ENCODE measurements at regions of chr5 and their contacts with region 1.

Region 1: DNA sequence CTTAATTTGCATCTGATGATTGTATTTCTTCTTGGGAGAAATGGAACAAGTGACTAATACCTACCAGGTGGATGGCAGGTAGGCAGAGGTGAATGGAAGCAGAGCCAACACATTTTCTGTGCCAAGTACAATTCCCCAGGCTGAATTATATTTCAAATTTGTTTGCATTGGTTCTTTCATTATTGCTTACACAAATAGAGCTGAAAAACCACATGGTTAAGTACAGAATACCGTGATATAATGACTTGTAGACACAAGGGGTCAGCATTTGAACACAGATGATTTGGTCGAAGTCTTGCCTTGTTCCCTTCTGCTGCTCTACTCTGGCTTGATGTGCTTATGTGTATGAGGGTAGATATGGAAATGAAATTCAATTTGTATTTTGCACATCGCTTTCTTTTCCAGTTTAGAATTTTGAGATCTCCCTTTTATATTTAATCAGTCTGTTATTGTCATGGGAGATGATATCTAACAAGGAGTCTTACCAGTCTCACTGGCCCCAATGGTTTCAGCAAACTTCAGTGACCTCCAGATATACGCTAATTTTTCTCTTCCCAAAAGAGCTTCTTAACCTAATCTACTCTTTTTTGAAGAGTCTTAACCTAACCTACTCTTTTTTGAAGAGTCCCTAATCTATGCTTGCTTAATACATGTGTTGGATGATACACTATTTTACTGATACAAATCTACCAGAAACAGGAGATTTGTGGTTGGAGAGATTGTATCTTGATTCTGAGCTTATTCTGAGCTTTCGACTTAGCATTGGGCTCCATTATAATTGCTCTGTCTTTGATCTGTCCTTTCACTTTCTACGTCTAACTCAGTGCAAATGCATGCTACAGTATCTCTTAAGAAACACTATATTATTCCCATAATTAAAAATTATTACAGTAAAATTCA is 88.1 kb downstream of the PCSK1 start:
- DNase-seq: peak in 1 of 2 donors; percentile 12
- ATAC-seq: peak; percentile 96

Region 2: DNA sequence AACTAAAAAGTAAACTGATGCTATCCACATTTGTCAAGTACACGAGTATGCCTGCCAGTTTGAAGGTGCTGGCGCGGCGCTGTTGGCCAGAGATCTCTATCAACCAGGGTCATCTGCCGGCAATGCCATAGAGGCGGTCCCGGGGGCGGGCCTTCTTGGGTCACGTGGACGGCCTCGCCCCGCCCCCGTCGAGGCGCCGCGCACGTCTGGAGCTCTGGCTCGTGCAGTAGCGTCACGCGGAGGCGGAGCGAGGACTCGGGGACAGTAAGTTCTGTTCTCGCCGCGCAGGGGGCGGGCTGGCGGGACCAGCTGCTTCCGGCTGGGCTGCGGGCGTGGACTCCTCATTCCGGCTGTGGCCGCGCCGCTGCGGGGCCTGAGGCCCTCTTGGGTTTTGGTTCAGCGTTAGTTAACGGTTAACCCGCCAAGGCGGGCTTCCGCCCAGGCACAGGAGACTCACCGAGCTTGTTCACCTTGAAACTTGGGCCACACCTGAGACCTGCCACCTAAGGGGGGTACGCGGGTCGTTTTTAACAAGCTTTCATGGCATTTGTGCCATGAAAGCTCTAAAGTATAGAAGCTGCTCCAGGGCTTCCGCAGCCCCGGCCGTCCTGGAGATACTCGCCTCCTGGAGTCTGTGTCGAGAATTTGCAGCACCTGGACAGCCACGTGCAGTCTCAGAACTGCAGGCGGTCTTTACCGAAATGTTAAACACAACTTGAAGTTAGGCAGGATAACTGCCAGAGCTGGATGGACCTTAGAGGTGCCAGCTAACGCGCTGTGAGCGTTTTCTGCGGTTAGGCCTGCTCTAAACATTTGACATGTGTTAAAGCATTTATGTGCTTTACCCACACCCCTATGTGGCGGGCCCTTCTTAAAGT is 698.1 kb before region 1 on chr5 and contains the start of gene RFESD:
- intact Hi-C with region 1: loop called in 1 of 2 experiments (anchors 10 kb)
- DNase-seq: peak; percentile 100
- ATAC-seq: peak; percentile 94
- total RNA-seq, gene RFESD: 0.55 to 0.84 TPM

Region 3: GRCh38 chr5:96509721-96510333 is 164.9 kb after region 1 on chr5:
- intact Hi-C with region 1: no loop called
- DNase-seq: no peak
- ATAC-seq: peak; percentile 95

Region 4: DNA sequence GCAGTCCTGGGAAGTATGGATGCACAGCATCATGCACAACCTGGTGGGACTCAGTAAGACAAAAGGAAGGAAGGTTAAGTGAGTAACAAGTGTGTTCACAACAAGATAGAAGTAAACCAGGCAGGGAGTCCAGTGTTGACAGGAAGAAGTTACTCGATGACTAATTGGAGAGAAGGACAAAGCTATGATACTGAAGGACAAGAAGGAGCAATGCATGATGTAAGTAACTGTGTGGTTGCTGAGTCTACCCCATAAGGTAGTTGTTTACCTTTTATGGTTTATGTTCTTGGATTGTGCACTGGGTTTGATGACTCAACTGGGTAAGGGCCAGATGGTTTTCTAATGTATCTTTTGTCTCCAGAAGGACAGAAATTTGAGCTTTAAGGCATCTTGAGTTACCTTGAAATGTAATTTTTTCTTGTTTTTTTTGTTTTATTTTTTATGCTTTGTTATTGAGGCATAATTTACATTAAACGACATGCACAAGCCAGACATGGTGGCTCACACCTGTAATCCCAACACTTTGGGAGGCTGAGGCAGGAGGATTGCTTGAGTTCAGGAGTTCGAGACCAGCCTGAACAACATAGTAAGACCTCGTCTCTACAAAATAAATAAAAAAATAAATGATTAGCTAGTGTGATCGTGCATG is 228.1 kb after region 1 on chr5:
- intact Hi-C with region 1: no loop called
- DNase-seq: no peak
- ATAC-seq: no peak

Region 5: GRCh38 chr5:96595300-96596090 is 250.6 kb after region 1 on chr5:
- intact Hi-C with region 1: loop called in 1 of 2 experiments (anchors 5 kb)
- DNase-seq: no peak
- ATAC-seq: no peak

Measured in left colon (tissue), 2 donors.